ENCODE measurements at regions of chr1 and their contacts with region 1.

Region 1: DNA sequence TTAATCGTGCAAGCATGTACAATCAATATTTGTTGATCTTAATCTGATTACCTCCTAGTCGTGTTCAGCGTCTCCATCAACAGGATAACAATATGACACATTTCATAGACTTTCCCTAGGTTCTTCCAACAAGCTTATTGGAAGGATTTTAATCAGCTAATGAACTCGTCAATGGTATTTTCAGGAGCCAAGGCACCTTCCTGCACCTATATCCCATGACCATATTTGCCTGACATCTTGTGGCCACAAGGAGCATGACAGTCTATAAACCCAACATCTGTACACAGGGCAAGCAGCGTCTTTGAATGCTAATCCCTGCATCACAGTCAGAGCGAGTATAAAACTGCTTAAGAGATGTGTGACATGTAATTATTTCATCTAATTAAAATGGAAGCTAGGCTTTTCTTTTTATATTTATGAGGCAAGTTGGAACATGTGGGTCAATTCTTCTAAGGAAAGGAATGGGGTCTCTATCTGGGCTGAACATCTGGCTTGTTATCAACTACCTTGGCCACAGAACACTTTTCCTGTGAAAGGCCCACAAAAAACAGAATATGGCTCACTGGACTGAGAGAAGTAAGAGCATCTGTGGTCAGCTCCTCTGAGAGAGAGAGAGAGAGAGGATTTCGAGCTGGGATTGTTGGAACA is 388.8 kb downstream of the NTNG1 start:
- DNase-seq: peak; percentile 17
- H3K4me3 ChIP-seq: no peak overlapping the region
- CTCF ChIP-seq: peak; percentile 79

Region 2: GRCh38 chr1:107142140-107142542 is 387.5 kb before region 1 on chr1:
- CTCF ChIA-PET with region 1: interaction called, 12 read pairs
- POLR2A ChIA-PET with region 1: no interaction called
- DNase-seq: no peak
- H3K4me3 ChIP-seq: peak overlapping the region; percentile 62
- CTCF ChIP-seq: peak; percentile 23

Region 3: DNA sequence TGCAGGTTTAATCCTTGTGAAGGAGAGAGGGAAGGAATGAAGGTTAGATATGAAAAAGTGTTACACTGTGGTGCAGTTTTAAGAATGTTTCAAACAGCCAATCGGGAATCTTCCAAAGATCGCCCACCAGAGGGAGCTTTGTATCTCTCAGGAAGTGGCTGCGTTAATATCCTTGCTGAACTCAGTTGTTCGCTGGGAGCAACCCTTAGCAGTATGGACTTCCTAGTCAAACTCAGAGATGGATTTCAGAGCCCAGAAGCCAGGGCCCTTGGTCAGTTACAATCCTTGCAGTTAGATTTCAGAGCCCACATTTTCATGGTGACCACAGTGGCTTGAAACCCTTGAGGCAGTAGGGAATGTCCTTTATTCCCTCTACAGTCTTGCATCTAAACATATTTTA is 252.6 kb before region 1 on chr1:
- CTCF ChIA-PET with region 1: interaction called, 151 read pairs
- POLR2A ChIA-PET with region 1: no interaction called
- DNase-seq: no peak
- H3K4me3 ChIP-seq: no peak overlapping the region
- CTCF ChIP-seq: peak; percentile 63

Region 4: GRCh38 chr1:107515702-107516101 is 13.9 kb before region 1 on chr1:
- CTCF ChIA-PET with region 1: interaction called, 19 read pairs
- POLR2A ChIA-PET with region 1: no interaction called
- DNase-seq: no peak
- H3K4me3 ChIP-seq: no peak overlapping the region
- CTCF ChIP-seq: no peak

Region 5: GRCh38 chr1:107547363-107548155 is 17.9 kb after region 1 on chr1:
- CTCF ChIA-PET with region 1: interaction called, 17 read pairs
- POLR2A ChIA-PET with region 1: no interaction called
- DNase-seq: no peak
- H3K4me3 ChIP-seq: no peak overlapping the region
- CTCF ChIP-seq: no peak

Region 6: DNA sequence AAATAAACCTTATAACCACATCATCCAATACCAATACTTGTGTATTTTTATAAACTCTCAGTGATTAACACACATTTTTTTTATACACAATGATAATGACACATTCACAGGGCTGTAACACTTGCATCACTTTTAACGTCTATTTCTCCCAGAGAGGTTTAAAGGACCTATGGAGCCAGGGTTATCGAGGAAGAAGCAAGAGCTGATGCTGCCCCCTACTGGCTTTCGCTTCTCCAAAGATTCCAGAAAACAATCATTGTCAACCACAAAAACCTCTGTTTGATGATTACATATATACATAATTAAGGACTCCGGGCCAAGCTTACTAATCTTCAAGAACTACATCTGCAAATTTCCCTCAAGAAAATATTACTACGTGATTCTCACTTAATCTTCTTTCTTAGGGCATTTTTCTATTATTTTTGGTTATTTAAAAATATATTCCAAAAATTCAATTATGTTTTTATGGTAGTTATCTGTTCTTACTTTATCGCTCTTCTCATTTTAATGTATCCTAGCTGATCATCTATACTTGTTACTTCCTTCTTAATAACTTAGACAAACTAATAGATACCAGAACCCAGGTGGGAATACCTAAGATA is 220.8 kb after region 1 on chr1:
- CTCF ChIA-PET with region 1: interaction called, 106 read pairs
- POLR2A ChIA-PET with region 1: no interaction called
- DNase-seq: peak; percentile 38
- H3K4me3 ChIP-seq: no peak overlapping the region
- CTCF ChIP-seq: peak; percentile 65

Measured in AG04449 (cell line).